Mammary epithelial cell (primary cell): ENCODE measurements at regions of chr19 and their contacts with region 1.

Region 1: GRCh38 chr19:49911381-49912145 is 14.9 kb upstream of the IL4I1 start:
- DNase-seq: no peak
- H3K4me3 ChIP-seq: no peak overlapping the region
- H3K27ac ChIP-seq: no peak overlapping the region
- H3K4me1 ChIP-seq: no peaks in the 10 kb centered on the region
- H3K27me3 ChIP-seq: no peaks in the 10 kb centered on the region
- CTCF ChIP-seq: no peak

Region 2: DNA sequence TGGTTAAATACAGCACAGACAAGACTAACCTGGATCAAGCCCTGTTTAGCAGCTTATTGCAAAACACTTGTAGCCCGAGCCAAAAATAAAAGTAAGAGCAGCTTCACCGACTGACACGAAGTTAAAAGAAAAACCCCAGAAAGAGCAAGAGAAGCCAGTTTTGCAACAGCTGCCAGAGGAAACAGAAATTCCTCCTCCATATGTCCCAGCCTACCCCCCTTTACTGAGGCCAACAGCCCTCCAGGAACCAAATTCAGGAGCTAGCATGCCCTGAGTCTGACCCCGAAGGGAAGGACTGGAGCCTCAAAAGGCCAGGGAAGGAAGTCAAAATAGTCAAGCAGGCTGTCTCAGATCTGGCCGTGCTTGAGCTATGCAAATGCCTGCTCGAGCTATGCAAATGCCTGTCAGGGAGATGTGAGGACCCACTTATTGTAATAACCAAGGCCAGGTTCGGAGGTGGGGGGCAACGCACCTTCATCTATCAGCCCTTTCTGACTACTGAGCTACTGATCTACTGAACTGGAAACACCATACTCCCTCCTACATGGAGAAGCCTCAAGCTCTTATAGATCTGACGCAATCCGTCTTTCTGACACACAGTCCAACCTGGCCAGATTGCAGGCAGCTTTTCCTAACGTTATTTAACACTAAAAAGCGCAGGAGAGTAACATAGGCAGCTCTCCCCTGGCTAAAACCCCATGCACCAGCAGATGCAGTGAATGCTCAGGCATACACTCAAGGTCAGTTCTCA is 42.7 kb after region 1 on chr19:
- CTCF ChIA-PET with region 1: no interaction called
- dilution Hi-C with region 1: no loop called
- in situ Hi-C with region 1: no loop called
- intact Hi-C with region 1: no loop called
- DNase-seq: no peak
- H3K4me3 ChIP-seq: no peak overlapping the region
- H3K27ac ChIP-seq: no peak overlapping the region
- H3K4me1 ChIP-seq: no peaks in the 10 kb centered on the region
- H3K27me3 ChIP-seq: no peaks in the 10 kb centered on the region
- CTCF ChIP-seq: no peak

Region 3: DNA sequence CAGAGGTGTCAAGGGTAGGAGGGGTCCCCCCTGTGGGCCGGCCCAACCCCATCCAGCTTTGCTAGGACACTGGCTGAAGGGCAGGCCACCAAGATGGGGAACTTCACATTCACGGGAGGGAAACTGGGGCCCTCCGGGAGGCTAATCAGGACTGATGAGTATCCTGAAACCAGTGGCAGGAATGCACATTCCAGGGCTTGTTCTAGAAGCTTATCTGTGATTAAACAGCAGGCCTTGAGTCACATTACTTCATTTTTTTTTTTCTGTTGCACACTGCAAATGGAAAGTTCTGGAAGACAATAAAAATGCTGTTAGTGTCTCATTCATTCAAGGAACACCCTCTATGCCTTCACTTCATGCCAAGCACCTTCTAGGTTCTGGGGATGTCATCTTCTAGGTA is 64.9 kb after region 1 on chr19:
- CTCF ChIA-PET with region 1: no interaction called
- dilution Hi-C with region 1: loop called (anchors 5 kb)
- in situ Hi-C with region 1: no loop called
- intact Hi-C with region 1: no loop called
- DNase-seq: no peak
- H3K4me3 ChIP-seq: no peak overlapping the region
- H3K27ac ChIP-seq: no peak overlapping the region
- H3K4me1 ChIP-seq: no peaks in the 10 kb centered on the region
- H3K27me3 ChIP-seq: no peaks in the 10 kb centered on the region
- CTCF ChIP-seq: no peak

Region 4: DNA sequence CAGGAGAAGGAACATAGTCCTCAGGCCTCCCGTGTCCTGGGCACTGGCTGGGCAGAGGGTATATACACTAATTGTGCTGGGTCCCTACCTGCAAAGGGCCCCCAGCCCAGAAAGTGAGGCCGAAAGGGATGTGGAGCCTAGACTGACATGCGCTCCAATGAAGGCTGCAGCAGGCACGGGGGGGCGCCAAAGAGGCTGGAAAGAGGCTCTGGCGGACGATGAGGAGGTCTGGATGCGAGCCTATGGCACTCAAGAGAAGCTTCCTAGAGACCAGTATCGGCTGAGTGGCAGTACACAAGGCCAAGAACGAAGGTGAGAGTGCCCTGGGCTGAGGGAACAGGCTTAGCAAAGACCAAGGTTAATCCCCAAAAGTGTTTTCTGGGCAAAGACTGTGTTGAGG is 97.0 kb after region 1 on chr19:
- CTCF ChIA-PET with region 1: no interaction called
- dilution Hi-C with region 1: loop called (anchors 5 kb)
- in situ Hi-C with region 1: no loop called
- intact Hi-C with region 1: no loop called
- DNase-seq: no peak
- H3K4me3 ChIP-seq: no peak overlapping the region
- H3K27ac ChIP-seq: no peak overlapping the region
- H3K4me1 ChIP-seq: peaks cover 14% of the 10 kb centered on the region
- H3K27me3 ChIP-seq: no peaks in the 10 kb centered on the region
- CTCF ChIP-seq: peak in 1 of 2 donors; percentile 22

Region 5: GRCh38 chr19:50020481-50020880 is 108.9 kb after region 1 on chr19:
- CTCF ChIA-PET with region 1: no interaction called
- dilution Hi-C with region 1: no loop called
- in situ Hi-C with region 1: no loop called
- intact Hi-C with region 1: no loop called
- DNase-seq: no peak
- H3K4me3 ChIP-seq: no peak overlapping the region
- H3K27ac ChIP-seq: no peak overlapping the region
- H3K4me1 ChIP-seq: peaks cover 5% of the 10 kb centered on the region
- H3K27me3 ChIP-seq: no peaks in the 10 kb centered on the region
- CTCF ChIP-seq: no peak

Region 6: DNA sequence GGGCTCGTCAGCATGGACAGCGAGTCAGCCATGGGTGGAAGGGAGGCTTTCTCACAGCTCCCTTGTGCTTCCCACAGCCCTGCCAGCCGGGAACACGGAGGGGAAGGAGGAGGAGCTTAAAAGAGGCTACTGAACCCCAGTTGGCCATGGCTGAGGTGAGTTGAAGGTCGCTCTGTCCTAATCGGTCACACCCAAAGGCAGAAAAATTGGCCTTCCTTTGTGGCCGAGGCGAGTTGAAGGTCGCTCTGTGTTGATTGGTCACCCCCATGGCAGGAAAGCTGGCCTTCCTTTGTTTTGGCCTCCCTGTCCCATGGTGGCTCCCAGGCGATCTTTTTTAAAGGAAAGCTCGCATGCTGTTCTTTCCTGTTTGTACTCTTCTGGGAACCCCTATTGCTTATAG is 119.4 kb after region 1 on chr19:
- CTCF ChIA-PET with region 1: no interaction called
- dilution Hi-C with region 1: no loop called
- in situ Hi-C with region 1: no loop called
- intact Hi-C with region 1: no loop called
- DNase-seq: no peak
- H3K4me3 ChIP-seq: no peak overlapping the region
- H3K27ac ChIP-seq: no peak overlapping the region
- H3K4me1 ChIP-seq: no peaks in the 10 kb centered on the region
- H3K27me3 ChIP-seq: no peaks in the 10 kb centered on the region
- CTCF ChIP-seq: no peak

Region 7: GRCh38 chr19:50050384-50051224 is 139.0 kb after region 1 on chr19:
- CTCF ChIA-PET with region 1: no interaction called
- dilution Hi-C with region 1: no loop called
- in situ Hi-C with region 1: no loop called
- intact Hi-C with region 1: no loop called
- DNase-seq: peak; percentile 77
- H3K4me3 ChIP-seq: peak overlapping the region; percentile 24 to 55 (median 40)
- H3K27ac ChIP-seq: peak overlapping the region; percentile 39
- H3K4me1 ChIP-seq: peaks cover 4% of the 10 kb centered on the region
- H3K27me3 ChIP-seq: no peaks in the 10 kb centered on the region
- CTCF ChIP-seq: no peak